ENCODE measurements at regions of chr21 and their contacts with region 1.

Region 1: GRCh38 chr21:33360881-33361602 is 36.3 kb downstream of the IFNAR1 start:
- DNase-seq: peak; percentile 78
- ATAC-seq: peak; percentile 98
- H3K4me3 ChIP-seq: peak overlapping the region; percentile 29
- H3K27ac ChIP-seq: peak overlapping the region; percentile 51
- H3K4me1 ChIP-seq: peaks cover 24% of the 10 kb centered on the region
- H3K27me3 ChIP-seq: no peaks in the 10 kb centered on the region
- CTCF ChIP-seq: peak; percentile 94 to 96 (median 94)
- EP300 ChIP-seq: no peak
- POLR2A ChIP-seq: peak; percentile 53; the same call in 1 of the 2 replicates
- RAD21 ChIP-seq: peak; percentile 66

Region 2: GRCh38 chr21:33199516-33200217 is 161.4 kb before region 1 on chr21:
- CTCF ChIA-PET with region 1: interaction called, 57 read pairs
- POLR2A ChIA-PET with region 1: interaction called, 3 read pairs
- RAD21 ChIA-PET with region 1: interaction called, 40 read pairs
- SMC1A ChIA-PET with region 1: interaction called, 34 read pairs
- in situ Hi-C with region 1: no loop called
- intact Hi-C with region 1: loop called (anchors 1 kb)
- DNase-seq: peak; percentile 73
- ATAC-seq: peak; percentile 76
- H3K4me3 ChIP-seq: no peak overlapping the region
- H3K27ac ChIP-seq: no peak overlapping the region
- H3K4me1 ChIP-seq: peaks cover 14% of the 10 kb centered on the region
- H3K27me3 ChIP-seq: no peaks in the 10 kb centered on the region; a peak in 1 of 4 replicates
- CTCF ChIP-seq: peak; percentile 74 to 90 (median 75)
- EP300 ChIP-seq: no peak
- POLR2A ChIP-seq: no peak
- RAD21 ChIP-seq: peak; percentile 96

Region 3: DNA sequence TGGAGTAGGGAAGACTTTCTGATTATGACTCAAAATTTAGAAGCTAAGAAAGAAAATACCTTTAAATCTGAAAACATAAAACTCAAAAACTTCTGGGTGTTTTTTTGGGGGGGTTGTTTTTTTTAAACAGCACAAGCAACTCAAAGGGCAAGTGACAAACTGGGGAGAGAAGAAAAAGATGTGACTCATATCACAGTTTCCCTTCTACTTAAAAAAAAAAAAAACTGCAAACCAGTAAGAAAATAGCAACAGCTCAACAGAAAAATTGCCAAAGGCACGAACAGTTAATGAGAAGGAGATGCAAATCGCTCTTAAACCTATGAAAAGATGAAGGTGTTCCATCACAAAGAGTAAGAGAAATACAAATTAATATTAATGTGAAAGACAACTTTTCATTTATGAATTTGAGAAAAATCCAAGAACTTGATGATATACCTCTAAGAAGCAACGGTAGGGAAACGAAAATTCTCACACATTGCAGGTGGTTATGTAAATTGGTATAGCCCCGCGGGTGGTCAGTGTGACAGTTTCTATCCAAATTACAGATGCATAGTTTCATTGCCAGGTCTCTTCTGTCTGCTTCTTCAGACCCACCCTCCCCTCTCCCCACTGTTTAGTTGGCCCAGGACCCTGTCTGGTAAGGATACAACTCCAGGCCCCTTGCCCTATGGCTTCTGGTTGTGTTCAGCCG is 122.3 kb before region 1 on chr21:
- CTCF ChIA-PET with region 1: interaction called, 17 read pairs
- POLR2A ChIA-PET with region 1: interaction called, 8 read pairs
- RAD21 ChIA-PET with region 1: interaction called, 18 read pairs
- SMC1A ChIA-PET with region 1: interaction called, 12 read pairs
- in situ Hi-C with region 1: no loop called
- intact Hi-C with region 1: no loop called
- DNase-seq: peak; percentile 76
- ATAC-seq: peak; percentile 79
- H3K4me3 ChIP-seq: peak overlapping the region; percentile 66
- H3K27ac ChIP-seq: peak overlapping the region; percentile 86
- H3K4me1 ChIP-seq: peaks cover 56% of the 10 kb centered on the region
- H3K27me3 ChIP-seq: no peaks in the 10 kb centered on the region
- CTCF ChIP-seq: no peak
- EP300 ChIP-seq: peak; percentile 79 to 96
- POLR2A ChIP-seq: 0 out of 2 replicates have a peak, but pooled peaks have one; percentile 40
- RAD21 ChIP-seq: 0 out of 2 replicates have a peak, but pooled peaks have one; percentile 10

Region 4: GRCh38 chr21:33324291-33325221 is 36.5 kb before region 1 on chr21 and contains the start of gene IFNAR1:
- CTCF ChIA-PET with region 1: interaction called, 40 read pairs
- POLR2A ChIA-PET with region 1: interaction called, 8 read pairs
- RAD21 ChIA-PET with region 1: interaction called, 39 read pairs
- SMC1A ChIA-PET with region 1: interaction called, 19 read pairs
- in situ Hi-C with region 1: no loop called
- intact Hi-C with region 1: loop called (anchors 1 kb)
- DNase-seq: peak; percentile 91
- ATAC-seq: peak; percentile 91
- H3K4me3 ChIP-seq: peak within 1 kb of the TSS; percentile 85
- H3K27ac ChIP-seq: peak within 1 kb of the TSS; percentile 97
- H3K4me1 ChIP-seq: peaks cover 4% of the 10 kb centered on the region; the same call in 1 of the 2 replicates
- H3K27me3 ChIP-seq: no peaks in the 10 kb centered on the region
- CTCF ChIP-seq: no peak
- EP300 ChIP-seq: no peak
- POLR2A ChIP-seq: peak; percentile 93
- RAD21 ChIP-seq: no peak
- polyA plus RNA-seq, gene IFNAR1: 25.6 to 30.9 TPM

Region 5: GRCh38 chr21:33348706-33349105 is 12.3 kb before region 1 on chr21:
- CTCF ChIA-PET with region 1: interaction called, 52 read pairs
- POLR2A ChIA-PET with region 1: interaction called, 3 read pairs
- RAD21 ChIA-PET with region 1: interaction called, 10 read pairs
- SMC1A ChIA-PET with region 1: interaction called, 8 read pairs
- in situ Hi-C with region 1: no loop called
- intact Hi-C with region 1: no loop called
- DNase-seq: no peak
- ATAC-seq: no peak
- H3K4me3 ChIP-seq: no peak overlapping the region
- H3K27ac ChIP-seq: no peak overlapping the region
- H3K4me1 ChIP-seq: no peaks in the 10 kb centered on the region
- H3K27me3 ChIP-seq: no peaks in the 10 kb centered on the region
- CTCF ChIP-seq: no peak
- EP300 ChIP-seq: no peak
- POLR2A ChIP-seq: no peak
- RAD21 ChIP-seq: no peak

Region 6: GRCh38 chr21:33386222-33386784 is 25.3 kb after region 1 on chr21:
- CTCF ChIA-PET with region 1: interaction called, 12 read pairs
- POLR2A ChIA-PET with region 1: interaction called, 7 read pairs
- RAD21 ChIA-PET with region 1: interaction called, 10 read pairs
- SMC1A ChIA-PET with region 1: interaction called, 29 read pairs
- in situ Hi-C with region 1: no loop called
- intact Hi-C with region 1: no loop called
- DNase-seq: no peak
- ATAC-seq: no peak
- H3K4me3 ChIP-seq: no peak overlapping the region
- H3K27ac ChIP-seq: no peak overlapping the region
- H3K4me1 ChIP-seq: peaks cover 35% of the 10 kb centered on the region
- H3K27me3 ChIP-seq: no peaks in the 10 kb centered on the region
- CTCF ChIP-seq: peak in 1 of 3 experiments; percentile 34; a peak in 1 of 6 replicates
- EP300 ChIP-seq: no peak
- POLR2A ChIP-seq: no peak
- RAD21 ChIP-seq: no peak

Region 7: GRCh38 chr21:33434770-33435360 is 73.8 kb after region 1 on chr21:
- CTCF ChIA-PET with region 1: interaction called, 182 read pairs
- POLR2A ChIA-PET with region 1: interaction called, 7 read pairs
- RAD21 ChIA-PET with region 1: interaction called, 16 read pairs
- SMC1A ChIA-PET with region 1: interaction called, 133 read pairs
- in situ Hi-C with region 1: no loop called
- intact Hi-C with region 1: no loop called
- DNase-seq: peak; percentile 99
- ATAC-seq: peak; percentile 89
- H3K4me3 ChIP-seq: no peak overlapping the region
- H3K27ac ChIP-seq: peak overlapping the region; percentile 92
- H3K4me1 ChIP-seq: peaks cover 41% of the 10 kb centered on the region
- H3K27me3 ChIP-seq: no peaks in the 10 kb centered on the region
- CTCF ChIP-seq: no peak
- EP300 ChIP-seq: peak in 1 of 2 experiments; percentile 77; a peak in 2 of 4 replicates
- POLR2A ChIP-seq: no peak
- RAD21 ChIP-seq: no peak

Measured in GM12878 (cell line).